HepG2 (cell line): ENCODE measurements at regions of chr10 and their contacts with region 1.

Region 1: GRCh38 chr10:70162151-70162891 is 8.0 kb downstream of the SAR1A start:
- DNase-seq: no peak
- ATAC-seq: no peak
- H3K4me3 ChIP-seq: no peak overlapping the region
- H3K27ac ChIP-seq: no peak overlapping the region
- H3K4me1 ChIP-seq: peaks cover 68% of the 10 kb centered on the region
- H3K27me3 ChIP-seq: no peaks in the 10 kb centered on the region
- CTCF ChIP-seq: no peak
- EP300 ChIP-seq: no peak
- POLR2A ChIP-seq: no peak
- RAD21 ChIP-seq: no peak

Region 2: DNA sequence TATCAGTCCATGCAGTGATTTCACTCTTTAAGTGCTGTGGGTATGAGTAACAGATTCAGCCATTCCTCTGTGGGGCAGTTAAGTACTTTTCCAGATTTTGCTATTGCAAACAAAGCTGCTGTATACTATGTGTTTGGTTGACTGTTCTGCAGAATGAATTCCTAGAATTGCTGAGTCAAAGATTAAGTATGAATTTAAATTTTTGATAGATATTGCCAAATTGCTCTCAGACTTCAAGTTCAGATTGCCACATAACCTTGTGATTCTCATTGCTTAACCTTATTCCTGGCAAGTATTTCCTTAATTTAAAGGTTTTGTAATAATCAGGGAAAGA is 29.6 kb after region 1 on chr10:
- CTCF ChIA-PET with region 1: no interaction called
- POLR2A ChIA-PET with region 1: no interaction called
- in situ Hi-C with region 1: no loop called
- intact Hi-C with region 1: loop called (anchors 1 kb)
- DNase-seq: no peak
- ATAC-seq: no peak
- H3K4me3 ChIP-seq: no peak overlapping the region
- H3K27ac ChIP-seq: no peak overlapping the region
- H3K4me1 ChIP-seq: peaks cover 27% of the 10 kb centered on the region
- H3K27me3 ChIP-seq: no peaks in the 10 kb centered on the region
- CTCF ChIP-seq: no peak
- EP300 ChIP-seq: no peak
- POLR2A ChIP-seq: no peak
- RAD21 ChIP-seq: no peak

Region 3: DNA sequence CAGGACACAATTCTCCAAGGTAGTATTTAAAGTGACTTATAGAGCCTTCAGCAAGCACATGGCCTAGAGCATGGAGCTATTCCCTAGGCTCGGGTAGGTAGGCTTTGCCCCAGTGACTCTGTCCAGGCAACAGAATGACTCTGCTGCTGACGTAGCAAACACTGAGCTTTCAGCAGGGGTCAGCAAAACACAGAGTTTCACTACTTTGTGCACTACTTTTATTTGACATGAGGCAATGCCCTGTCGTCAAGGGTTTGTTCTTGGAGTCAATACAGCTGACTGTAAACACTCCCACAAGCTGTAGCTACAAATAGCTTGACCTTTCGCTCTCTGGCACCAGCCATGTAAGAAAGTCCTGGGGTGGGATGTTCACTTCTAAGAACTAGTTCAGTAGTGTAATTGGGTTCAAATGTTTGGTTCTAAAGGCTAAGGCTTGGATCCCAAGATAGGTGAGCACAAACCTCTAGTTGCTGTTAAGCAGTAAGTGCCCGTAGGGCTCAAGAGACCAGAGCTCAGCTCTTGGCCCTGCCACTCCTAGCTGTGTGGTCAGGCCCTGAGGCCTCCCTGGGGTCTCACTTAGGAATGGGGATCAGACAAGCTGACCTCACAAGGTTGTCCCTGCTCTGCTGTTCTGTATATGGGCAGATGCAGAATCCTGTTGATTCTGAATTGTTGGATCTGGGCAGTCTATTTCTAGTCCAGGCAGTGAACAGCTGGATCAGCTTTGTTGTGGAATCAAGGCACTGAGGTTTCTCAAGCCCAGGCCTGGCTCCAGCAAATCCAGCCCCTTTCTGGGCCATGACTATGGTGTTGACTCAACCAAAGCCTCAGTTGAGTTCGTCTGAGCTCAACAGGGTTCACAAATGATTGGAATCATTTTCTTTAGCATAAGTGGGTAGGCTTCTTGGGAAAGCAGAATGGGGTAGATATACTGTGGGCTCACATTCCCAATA is 268.4 kb after region 1 on chr10:
- CTCF ChIA-PET with region 1: no interaction called
- POLR2A ChIA-PET with region 1: no interaction called
- in situ Hi-C with region 1: no loop called
- intact Hi-C with region 1: no loop called
- DNase-seq: peak; percentile 80
- ATAC-seq: peak; percentile 80
- H3K4me3 ChIP-seq: no peak overlapping the region
- H3K27ac ChIP-seq: no peak overlapping the region
- H3K4me1 ChIP-seq: peaks cover 29% of the 10 kb centered on the region
- H3K27me3 ChIP-seq: no peaks in the 10 kb centered on the region
- CTCF ChIP-seq: peak; percentile 80
- EP300 ChIP-seq: no peak
- POLR2A ChIP-seq: no peak
- RAD21 ChIP-seq: peak; percentile 46; the same call in 1 of the 2 replicates